Dorsolateral prefrontal cortex (tissue), 120 donors: ENCODE measurements at regions of chr20 and their contacts with region 1.

Region 1: DNA sequence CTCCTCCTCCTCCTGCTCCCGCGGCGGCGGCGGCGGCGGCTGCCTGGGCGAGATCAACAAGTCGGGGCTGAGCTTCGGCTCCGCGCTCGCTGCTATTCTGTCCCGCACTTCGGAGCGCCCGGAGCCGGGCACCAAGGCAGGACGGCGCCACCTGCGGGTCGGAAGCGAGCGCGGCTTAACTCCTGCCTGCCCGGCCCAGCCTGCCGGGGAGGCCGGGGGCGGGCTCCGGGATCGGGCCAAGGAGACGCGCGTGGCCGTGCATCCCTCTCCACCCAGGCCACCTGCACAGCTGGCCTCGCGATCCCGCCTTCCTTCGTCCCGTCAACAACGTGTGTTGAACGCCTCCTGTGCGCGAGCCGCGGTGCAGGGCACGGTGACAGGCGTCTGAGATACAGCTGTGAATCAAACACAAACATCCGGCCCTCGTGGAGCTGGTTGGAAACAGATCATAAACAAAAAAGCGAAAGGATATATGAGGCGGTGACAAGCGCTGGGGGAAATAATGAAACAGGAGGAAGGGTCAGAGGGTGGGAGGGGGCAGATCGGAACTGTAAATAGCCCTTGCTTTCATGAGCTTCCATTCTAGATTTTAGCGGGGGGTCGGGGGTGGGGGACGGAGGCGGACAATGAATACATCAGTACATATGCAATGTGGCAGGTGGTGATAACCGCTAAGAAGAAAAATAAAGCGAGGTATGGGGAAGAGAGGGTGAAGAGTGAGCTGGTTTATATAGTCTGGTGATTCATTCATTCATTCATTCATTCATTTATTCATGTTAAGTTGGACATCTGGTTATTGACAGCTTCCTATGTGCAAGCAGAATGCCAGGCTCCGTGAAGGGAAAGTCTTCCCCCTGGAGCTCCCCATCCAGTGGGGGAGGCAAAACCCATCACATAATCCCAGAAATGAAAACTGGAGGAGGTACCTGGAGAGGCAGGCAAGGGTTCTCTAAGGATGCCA is 2.0 kb upstream of the KCNB1 start:
- DNase-seq: peak; percentile 62 to 90 (median 84)
- H3K4me3 ChIP-seq: peak overlapping the region; percentile 35 to 78 (median 63)
- H3K27ac ChIP-seq: peak overlapping the region in 51 of 59 donors; percentile 9 to 94 (median 74)
- H3K27me3 ChIP-seq: peaks cover 0 to 10% (median 0%) of the 10 kb centered on the region in 45 donors
- CTCF ChIP-seq: peak; percentile 30 to 84 (median 74)

Region 2: GRCh38 chr20:49338061-49338460 is 146.4 kb before region 1 on chr20:
- intact Hi-C with region 1: loop called (anchors 1 to 2 kb)
- DNase-seq: no peak
- H3K4me3 ChIP-seq: no peak overlapping the region
- H3K27ac ChIP-seq: no peak overlapping the region
- H3K27me3 ChIP-seq: no peaks in the 10 kb centered on the region
- CTCF ChIP-seq: no peak

Region 3: GRCh38 chr20:49344975-49345374 is 139.5 kb before region 1 on chr20:
- intact Hi-C with region 1: loop called in 1 of 2 experiments (anchors 5 kb)
- DNase-seq: peak in 7 of 10 donors; percentile 47 to 86 (median 71)
- H3K4me3 ChIP-seq: peak overlapping the region in 3 of 59 donors; percentile 1 to 10 (median 10)
- H3K27ac ChIP-seq: peak overlapping the region in 56 of 59 donors; percentile 14 to 93 (median 82)
- H3K27me3 ChIP-seq: no peaks in the 10 kb centered on the region
- CTCF ChIP-seq: no peak

Region 4: GRCh38 chr20:49384437-49385088 is 99.9 kb before region 1 on chr20:
- intact Hi-C with region 1: loop called in 1 of 2 experiments (anchors 5 kb)
- DNase-seq: peak; percentile 43 to 82 (median 70)
- H3K4me3 ChIP-seq: no peak overlapping the region
- H3K27ac ChIP-seq: peak overlapping the region in 42 of 59 donors; percentile 6 to 73 (median 41)
- H3K27me3 ChIP-seq: no peaks in the 10 kb centered on the region
- CTCF ChIP-seq: peak; percentile 46 to 84 (median 72)

Region 5: GRCh38 chr20:49424536-49424935 is 59.9 kb before region 1 on chr20:
- intact Hi-C with region 1: loop called in 1 of 2 experiments (anchors 10 kb)
- DNase-seq: peak; percentile 45 to 95 (median 84)
- H3K4me3 ChIP-seq: no peak overlapping the region
- H3K27ac ChIP-seq: peak overlapping the region in 56 of 59 donors; percentile 11 to 94 (median 74)
- H3K27me3 ChIP-seq: peaks cover 0 to 5% (median 0%) of the 10 kb centered on the region in 45 donors
- CTCF ChIP-seq: no peak